OCI-LY7 (cell line): ENCODE measurements at regions of chr11 and their contacts with region 1.

Region 1: DNA sequence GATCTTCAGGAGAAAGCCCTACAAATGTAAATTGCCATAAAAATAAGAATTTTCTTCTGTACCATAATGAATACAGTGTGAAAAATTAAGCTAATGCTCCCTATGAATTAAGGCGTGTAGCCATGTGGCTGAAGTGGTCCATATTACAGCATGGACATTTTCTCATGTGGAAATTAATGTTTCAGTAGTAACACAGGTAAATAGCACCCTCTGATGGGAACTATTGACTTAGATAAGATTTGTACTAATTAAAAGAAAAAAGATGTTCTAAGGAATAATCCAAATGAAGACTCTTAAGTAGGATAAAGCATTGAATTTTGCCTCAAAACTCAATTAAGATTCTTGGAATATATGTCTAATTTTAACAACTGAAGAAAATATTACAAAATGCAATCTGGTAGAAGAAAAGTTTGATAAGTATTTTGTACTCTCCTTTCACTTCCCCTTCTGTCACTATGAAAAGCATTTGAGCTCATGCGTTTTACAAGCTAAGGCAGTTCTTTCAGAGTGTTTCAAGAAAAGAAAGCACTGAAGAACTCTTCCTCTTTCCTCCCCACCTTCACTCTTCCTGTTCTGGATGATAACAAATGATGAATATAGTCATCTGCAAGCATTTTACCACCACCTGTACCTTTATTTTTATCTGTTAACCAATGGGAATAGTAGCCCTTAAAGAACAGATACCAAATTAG is 9.9 kb upstream of the OR8D2 start:
- DNase-seq: peak; percentile 87
- H3K4me3 ChIP-seq: peak overlapping the region; percentile 35
- H3K27ac ChIP-seq: peak overlapping the region; percentile 72
- H3K4me1 ChIP-seq: peaks cover 29% of the 10 kb centered on the region
- CTCF ChIP-seq: peak; percentile 80

Region 2: DNA sequence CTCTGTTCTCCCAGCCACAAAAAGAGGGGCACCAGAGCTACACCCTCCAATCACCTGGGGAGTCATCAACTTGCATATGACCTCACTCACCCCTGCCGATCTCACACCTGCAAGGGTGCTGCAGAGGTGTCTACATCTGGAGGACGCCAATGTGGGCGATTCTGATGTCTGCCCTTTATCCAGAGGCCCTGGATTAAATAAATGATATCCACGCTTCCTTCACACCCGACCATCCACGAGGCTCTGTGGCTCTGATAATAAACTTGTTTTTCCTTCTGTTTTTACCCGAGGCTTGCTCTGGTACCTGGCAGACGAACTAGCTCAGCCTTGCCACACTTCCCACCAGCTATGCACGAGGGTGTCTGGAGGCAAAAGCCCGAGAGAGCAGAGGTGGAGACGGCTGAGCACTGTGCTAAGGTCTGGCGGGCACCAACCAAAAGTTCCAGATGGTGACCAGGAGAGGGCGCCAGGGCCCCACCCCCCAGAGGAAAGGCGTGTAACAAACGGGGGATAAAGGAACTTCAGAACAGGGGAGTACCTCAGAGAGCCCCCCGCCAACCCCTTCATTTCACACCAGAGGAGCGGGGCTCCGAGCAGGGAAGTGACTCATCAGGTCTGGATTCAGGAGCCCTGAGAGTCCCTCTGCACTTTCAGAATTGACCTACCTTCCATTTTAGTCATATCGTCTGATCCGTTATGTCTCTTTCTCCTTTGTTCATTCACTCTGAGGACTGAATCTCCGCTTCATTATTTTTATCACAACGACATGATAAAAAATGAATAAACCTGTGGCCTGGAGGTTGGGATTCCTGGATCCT is 689.0 kb before region 1 on chr11:
- CTCF ChIA-PET with region 1: no interaction called
- POLR2A ChIA-PET with region 1: no interaction called
- intact Hi-C with region 1: loop called (anchors 10 kb)
- DNase-seq: peak; percentile 50
- H3K4me3 ChIP-seq: no peak overlapping the region
- H3K27ac ChIP-seq: no peak overlapping the region
- H3K4me1 ChIP-seq: no peaks in the 10 kb centered on the region
- CTCF ChIP-seq: peak; percentile 89

Region 3: DNA sequence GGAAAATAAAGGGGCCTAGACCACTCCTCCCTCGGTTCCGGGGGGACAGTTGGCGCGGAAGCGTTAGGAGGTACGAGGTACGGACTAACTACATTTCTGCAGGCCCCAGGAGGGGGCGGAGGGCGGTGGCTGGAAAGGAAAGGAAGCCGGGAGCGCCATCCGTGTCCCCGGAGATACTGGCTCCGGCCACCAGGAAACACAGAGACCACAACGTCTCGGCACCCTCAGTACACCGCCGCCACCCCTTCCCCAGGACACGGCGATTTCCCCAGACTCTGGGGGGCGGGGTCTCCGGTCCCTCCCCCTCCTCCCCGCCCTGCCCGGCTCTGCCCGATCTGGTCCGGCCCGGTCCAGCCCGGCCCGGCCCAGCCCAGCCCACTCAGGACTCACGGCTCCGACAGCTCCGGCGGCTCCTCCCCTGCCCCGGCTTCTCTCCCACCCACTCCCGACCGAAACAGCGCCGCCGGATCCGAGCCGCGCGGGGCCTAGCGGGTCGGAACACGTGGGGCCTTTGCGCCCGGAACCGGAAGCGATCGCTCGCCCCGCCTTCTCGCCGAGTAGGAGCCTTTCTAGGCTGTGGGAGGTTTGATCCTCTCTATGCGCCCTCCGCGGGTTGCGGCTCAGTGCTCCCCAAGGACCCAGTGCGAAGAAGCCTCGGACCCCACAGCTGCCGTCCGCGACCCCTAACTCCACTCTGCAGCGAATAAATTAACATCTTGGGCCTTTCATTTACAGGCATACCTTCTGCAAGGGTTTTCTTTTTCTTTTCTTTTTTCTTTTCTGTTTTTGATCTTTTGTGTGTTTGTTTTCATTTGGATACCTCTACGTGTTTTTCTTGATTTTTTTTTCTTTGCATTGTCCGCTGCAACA is 588.5 kb before region 1 on chr11 and contains the start of gene ZNF202:
- CTCF ChIA-PET with region 1: no interaction called
- POLR2A ChIA-PET with region 1: interaction called, 5 read pairs
- intact Hi-C with region 1: loop called (anchors 5 kb)
- DNase-seq: peak; percentile 94
- H3K4me3 ChIP-seq: peak within 1 kb of the TSS; percentile 96
- H3K27ac ChIP-seq: peak within 1 kb of the TSS; percentile 38
- H3K4me1 ChIP-seq: peaks cover 24% of the 10 kb centered on the region
- CTCF ChIP-seq: no peak
- total RNA-seq, gene ZNF202: 15.9 and 19.6 TPM in 2 replicates

Region 4: DNA sequence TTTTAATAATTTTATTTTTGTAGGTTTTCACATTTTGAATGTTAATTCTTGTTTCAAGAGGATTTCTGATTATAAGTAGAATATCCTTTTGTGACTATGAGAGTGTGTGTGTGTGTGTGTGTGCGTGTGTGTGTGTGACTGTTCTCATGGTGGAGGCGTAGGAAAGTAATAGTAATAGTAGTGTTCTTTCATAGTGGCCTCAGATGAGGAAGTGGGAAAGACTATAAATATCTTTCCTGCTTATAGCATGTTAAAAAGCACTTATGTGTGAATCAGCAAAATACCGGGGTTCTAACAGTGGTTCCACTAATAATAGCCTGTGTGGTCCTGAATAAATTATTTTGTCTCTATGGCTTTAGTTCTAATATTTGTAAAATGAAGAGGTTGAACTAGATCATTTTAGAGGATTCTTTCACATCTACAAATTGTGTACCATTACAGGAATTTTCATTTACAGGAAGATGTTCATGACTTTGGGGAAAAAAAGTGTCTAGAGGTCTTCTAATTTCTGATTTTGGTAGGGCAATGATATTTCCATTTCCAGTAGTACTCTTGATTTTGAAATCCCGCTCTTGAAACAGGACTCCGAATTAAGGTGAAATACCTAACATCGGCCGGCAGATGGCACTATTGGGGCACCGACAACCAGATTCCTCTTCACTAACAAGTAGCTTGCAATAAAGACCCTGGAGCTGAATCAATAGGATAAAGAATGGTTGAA is 258.9 kb before region 1 on chr11:
- CTCF ChIA-PET with region 1: interaction called, 5 read pairs
- POLR2A ChIA-PET with region 1: interaction called, 3 read pairs
- intact Hi-C with region 1: loop called (anchors 1 kb)
- DNase-seq: peak; percentile 69
- H3K4me3 ChIP-seq: peak overlapping the region; percentile 28
- H3K27ac ChIP-seq: peak overlapping the region; percentile 6
- H3K4me1 ChIP-seq: peaks cover 21% of the 10 kb centered on the region
- CTCF ChIP-seq: peak; percentile 95

Region 5: DNA sequence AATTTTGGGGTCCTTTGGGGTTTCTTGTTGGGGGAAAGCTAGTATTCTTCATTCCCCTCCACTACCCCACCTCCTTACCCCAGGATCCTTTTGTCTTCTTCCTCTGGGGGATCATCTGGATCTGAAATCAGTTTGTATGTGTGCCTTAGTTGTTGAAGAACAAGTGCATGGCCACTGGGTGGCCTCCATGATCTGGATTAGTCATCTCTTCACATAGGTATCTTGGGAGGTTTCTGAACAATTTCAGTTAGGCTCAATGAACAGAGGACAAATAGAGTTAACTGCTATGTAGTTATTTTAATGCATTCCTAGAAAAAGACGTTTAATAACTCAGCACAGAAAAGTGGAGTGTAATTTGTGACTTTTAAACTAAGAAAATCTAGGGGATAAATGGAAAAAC is 221.8 kb before region 1 on chr11:
- CTCF ChIA-PET with region 1: no interaction called
- POLR2A ChIA-PET with region 1: no interaction called
- intact Hi-C with region 1: loop called (anchors 5 kb)
- DNase-seq: peak; percentile 14
- H3K4me3 ChIP-seq: no peak overlapping the region
- H3K27ac ChIP-seq: no peak overlapping the region
- H3K4me1 ChIP-seq: no peaks in the 10 kb centered on the region
- CTCF ChIP-seq: peak; percentile 60

Region 6: DNA sequence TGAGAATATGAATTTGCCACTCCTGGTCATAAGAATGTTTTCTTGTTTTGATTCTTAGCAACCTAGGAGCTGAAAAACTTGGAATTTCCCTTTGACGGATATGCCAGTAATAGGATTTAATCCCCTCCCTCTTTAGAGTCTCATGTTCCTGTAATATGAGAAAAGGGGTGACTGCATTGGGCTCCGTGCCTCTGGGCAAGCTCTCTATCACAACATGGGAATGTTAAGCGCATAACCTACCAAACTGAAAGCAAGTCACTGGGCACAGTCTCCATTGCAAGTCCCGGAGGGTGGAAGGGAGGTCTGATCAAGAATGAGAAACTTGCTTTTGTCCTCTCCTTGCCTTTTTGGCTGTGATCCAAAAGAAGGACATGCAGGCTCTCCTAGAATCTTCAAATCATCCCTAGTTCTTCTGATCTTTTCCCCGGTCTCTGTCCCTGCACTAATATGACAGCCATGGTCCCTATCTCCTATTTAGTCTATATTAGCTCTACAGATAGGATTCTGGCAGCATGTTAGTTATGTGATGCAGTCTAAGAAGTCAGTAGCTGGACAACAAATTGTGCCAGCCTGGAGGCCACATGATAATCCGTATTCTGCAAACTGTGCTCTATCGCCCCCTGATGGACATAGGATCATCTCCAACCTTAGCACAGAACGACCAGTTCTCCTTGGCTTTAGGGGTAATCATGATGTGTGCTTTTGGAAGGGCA is 135.1 kb before region 1 on chr11:
- CTCF ChIA-PET with region 1: interaction called, 3 read pairs
- POLR2A ChIA-PET with region 1: no interaction called
- intact Hi-C with region 1: loop called (anchors 5 kb)
- DNase-seq: peak; percentile 56
- H3K4me3 ChIP-seq: no peak overlapping the region
- H3K27ac ChIP-seq: no peak overlapping the region
- H3K4me1 ChIP-seq: no peaks in the 10 kb centered on the region
- CTCF ChIP-seq: peak; percentile 91

Region 7: DNA sequence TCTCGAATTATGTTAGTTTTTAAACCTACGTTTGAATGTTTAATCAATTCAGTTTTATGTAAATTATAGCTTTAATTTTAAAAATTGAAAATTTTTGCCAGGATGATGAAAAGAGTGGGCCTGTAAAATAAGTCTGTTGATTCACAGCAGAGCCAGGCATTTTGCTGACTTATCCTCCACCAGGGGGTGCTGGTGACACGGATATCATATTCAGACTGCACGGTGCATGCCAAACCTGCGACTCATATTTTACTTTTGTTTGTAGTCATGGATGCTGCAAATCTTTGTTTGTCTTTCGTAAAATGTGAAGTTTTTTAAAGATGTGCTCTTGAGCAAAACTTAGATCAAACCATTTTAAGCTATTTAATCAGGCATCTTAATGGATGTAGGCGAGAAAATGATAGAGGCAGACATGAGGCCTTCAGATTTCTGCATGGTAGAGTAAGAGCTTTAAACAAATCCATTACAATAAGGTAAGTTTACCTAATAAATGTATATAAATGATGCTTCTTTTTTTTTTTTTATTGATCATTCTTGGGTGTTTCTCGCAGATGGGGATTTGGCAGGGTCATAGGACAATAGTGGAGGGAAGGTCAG is 72.5 kb after region 1 on chr11:
- CTCF ChIA-PET with region 1: no interaction called
- POLR2A ChIA-PET with region 1: no interaction called
- intact Hi-C with region 1: loop called (anchors 5 kb)
- DNase-seq: peak; percentile 65
- H3K4me3 ChIP-seq: no peak overlapping the region
- H3K27ac ChIP-seq: no peak overlapping the region
- H3K4me1 ChIP-seq: no peaks in the 10 kb centered on the region
- CTCF ChIP-seq: peak; percentile 90